ENCODE measurements at regions of chr18 and their contacts with region 1.

Region 1: GRCh38 chr18:57630002-57630753 is 8.5 kb upstream of the NARS1 start:
- DNase-seq: peak; percentile 99
- H3K4me3 ChIP-seq: peak overlapping the region; percentile 34 to 69 (median 58)
- H3K27ac ChIP-seq: peak overlapping the region; percentile 74 to 82 (median 81)
- H3K4me1 ChIP-seq: peaks cover 0 to 11% (median 8%) of the 10 kb centered on the region in 4 donors
- H3K27me3 ChIP-seq: no peaks in the 10 kb centered on the region
- CTCF ChIP-seq: peak; percentile 63 to 70 (median 66)
- EP300 ChIP-seq: peak in 1 of 4 donors; percentile 66
- POLR2A ChIP-seq: no peak

Region 2: GRCh38 chr18:57333940-57334339 is 296.2 kb before region 1 on chr18:
- intact Hi-C with region 1: no loop called
- DNase-seq: no peak
- H3K4me3 ChIP-seq: no peak overlapping the region
- H3K27ac ChIP-seq: no peak overlapping the region
- H3K4me1 ChIP-seq: no peaks in the 10 kb centered on the region
- H3K27me3 ChIP-seq: no peaks in the 10 kb centered on the region
- CTCF ChIP-seq: no peak
- EP300 ChIP-seq: no peak
- POLR2A ChIP-seq: no peak

Region 3: GRCh38 chr18:57803103-57803969 is 173.2 kb after region 1 on chr18 and contains the start of gene ATP8B1:
- intact Hi-C with region 1: loop called (anchors 5 kb)
- DNase-seq: peak; percentile 84
- H3K4me3 ChIP-seq: peak within 1 kb of the TSS; percentile 68 to 85 (median 75)
- H3K27ac ChIP-seq: peak within 1 kb of the TSS; percentile 71 to 92 (median 86)
- H3K4me1 ChIP-seq: peaks cover 0 to 49% (median 28%) of the 10 kb centered on the region in 4 donors
- H3K27me3 ChIP-seq: peaks cover 0 to 6% (median 0%) of the 10 kb centered on the region in 3 donors
- CTCF ChIP-seq: no peak
- EP300 ChIP-seq: no peak
- POLR2A ChIP-seq: peak; percentile 66 to 67
- total RNA-seq, gene ATP8B1: 8.1 to 18.0 (median 11.6) TPM

Region 4: DNA sequence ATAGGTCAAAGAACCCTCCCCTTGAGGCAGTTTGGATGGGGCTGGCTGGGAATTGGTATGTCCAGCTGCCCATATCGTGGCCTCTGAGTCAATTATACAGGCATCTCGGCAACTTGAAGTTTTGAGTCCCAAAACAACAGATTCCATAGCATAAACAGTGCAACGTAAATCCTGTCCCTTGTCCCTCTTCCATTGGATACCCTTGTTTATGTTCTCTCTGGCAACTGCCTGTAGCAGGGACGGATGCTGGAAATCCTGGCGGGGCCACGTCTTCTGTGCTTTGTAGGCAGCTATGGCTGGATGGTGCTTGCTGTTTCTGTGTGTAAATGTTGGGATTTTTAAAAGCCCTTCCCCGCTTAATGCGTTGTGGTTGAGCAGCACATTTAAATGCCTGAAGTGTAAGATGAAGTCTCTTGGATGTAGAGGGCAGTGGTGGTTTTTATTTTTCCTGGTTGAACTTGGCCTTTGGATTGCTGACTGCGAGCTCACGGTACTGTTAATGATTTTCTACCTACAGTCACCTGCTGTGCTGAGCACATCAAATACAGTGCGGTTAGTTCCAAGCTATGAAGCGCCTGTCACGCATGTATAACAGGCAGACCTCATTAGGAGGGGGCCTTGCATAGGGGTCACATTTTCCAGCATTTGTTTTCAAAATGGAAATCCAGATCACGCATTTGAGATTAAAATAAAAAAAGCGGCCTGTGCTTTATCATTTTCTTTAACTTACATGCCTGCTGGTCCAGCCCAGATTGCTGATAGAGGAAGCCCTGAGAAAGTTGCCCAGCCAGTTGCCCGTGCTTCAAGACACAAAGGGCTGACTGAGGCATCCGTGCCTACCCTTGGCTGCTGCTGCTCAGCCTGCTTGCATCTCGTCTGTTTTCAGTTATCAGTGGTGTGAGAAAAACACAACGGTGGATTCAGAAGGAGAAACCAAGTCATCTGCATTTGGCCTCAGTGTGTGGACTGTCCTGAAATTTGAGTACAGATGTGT is 498.5 kb after region 1 on chr18:
- intact Hi-C with region 1: loop called (anchors 10 kb)
- DNase-seq: no peak
- H3K4me3 ChIP-seq: no peak overlapping the region
- H3K27ac ChIP-seq: no peak overlapping the region
- H3K4me1 ChIP-seq: no peaks in the 10 kb centered on the region
- H3K27me3 ChIP-seq: no peaks in the 10 kb centered on the region
- CTCF ChIP-seq: no peak
- EP300 ChIP-seq: no peak
- POLR2A ChIP-seq: no peak